GM12878 (cell line): ENCODE measurements at regions of chr5 and their contacts with region 1.

Region 1: DNA sequence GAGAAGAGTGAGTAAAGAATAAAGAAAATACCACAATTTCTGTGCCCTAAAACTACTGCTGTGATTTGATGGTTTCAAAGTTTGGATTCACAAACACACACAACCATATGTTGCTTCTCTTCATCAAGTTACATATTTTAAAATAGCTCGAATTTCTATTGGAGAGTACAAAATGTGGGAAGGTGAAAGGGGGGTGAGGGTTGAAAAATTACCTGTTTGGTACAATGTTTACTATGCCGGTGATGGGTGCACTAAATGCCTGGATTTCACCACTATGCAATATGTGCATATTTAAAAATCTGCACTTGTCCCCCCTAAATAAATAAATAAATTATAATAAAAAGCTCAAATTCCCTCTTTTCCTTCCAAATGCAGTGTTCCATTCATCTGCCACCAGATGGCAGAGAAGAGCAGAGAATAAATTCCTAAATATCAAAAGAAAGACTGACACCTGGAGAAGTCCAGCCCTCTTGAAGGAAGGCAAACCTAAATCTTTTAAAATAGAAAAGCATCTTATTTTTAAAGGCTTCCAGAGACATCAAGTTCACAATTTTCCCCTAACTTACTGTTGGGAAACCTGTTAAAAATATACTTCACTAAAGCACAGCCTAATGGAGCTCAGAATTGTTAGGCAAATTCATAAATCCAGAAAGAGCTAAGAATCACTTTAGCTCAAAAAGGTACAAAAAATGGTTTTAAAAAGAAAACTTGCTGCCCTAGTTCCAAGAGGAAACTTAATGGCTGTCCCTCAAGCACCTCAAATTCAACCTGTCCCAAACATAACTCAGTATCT is 24.8 kb upstream of the HNRNPA0 start:
- DNase-seq: no peak
- ATAC-seq: 0 out of 3 replicates have a peak, but pooled peaks have one; percentile 27
- H3K4me3 ChIP-seq: no peak overlapping the region
- H3K27ac ChIP-seq: no peak overlapping the region
- H3K4me1 ChIP-seq: peaks cover 3% of the 10 kb centered on the region; the same call in 1 of the 2 replicates
- H3K27me3 ChIP-seq: no peaks in the 10 kb centered on the region
- CTCF ChIP-seq: peak; percentile 63 to 65 (median 63)
- EP300 ChIP-seq: no peak
- POLR2A ChIP-seq: no peak
- RAD21 ChIP-seq: peak; percentile 94

Region 2: DNA sequence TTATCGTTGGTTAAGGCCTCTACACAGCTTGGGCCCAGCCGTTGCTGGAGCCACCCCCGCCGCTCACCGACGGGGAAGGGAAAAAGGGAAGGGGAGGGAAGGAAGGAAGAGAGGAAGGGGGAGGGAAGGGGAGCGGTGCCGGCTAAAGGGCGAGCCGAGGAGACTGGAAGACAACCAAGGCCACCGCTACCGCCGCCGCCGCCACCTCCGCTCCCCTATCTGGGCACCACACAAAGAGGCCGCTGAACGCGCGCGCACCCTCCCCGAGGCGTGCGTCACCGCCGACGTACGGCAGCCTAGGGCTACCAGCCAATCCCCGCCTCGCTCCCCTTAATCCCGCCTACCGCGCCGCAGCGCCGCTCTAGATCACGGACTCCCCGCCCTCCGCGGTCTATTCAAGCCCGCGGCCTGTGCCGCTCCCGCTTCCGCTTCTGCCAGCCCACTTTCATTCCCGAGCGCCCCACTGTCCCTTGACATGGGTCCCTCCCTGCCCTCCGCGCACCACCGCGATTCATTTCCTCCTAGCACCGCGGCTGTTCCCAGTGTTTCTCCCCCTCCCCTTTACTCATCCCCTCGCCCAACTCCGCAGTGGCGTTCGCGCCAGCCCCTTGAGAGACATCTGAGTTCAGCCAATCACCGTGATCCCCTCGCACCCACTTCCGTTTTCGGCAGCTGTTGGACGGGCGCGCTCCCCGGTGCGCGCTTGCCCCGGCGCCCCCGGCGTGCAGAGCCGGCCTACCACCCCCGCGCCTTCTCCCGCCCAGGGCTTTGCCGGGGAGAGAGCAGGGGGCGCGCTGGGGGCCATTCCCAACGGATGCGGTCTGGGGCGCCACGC is 24.6 kb before region 1 on chr5 and contains the start of gene HNRNPA0:
- CTCF ChIA-PET with region 1: interaction called, 19 read pairs
- POLR2A ChIA-PET with region 1: interaction called, 4 read pairs
- RAD21 ChIA-PET with region 1: interaction called, 16 read pairs
- SMC1A ChIA-PET with region 1: interaction called, 8 read pairs
- in situ Hi-C with region 1: no loop called
- intact Hi-C with region 1: no loop called
- DNase-seq: peak; percentile 88
- ATAC-seq: peak; percentile 88
- H3K4me3 ChIP-seq: peak within 1 kb of the TSS; percentile 91
- H3K27ac ChIP-seq: peak within 1 kb of the TSS; percentile 96
- H3K4me1 ChIP-seq: peaks cover 28% of the 10 kb centered on the region
- H3K27me3 ChIP-seq: no peaks in the 10 kb centered on the region
- CTCF ChIP-seq: no peak
- EP300 ChIP-seq: peak in 1 of 2 experiments; percentile 100; a peak in 2 of 4 replicates
- POLR2A ChIP-seq: peak; percentile 86
- RAD21 ChIP-seq: no peak
- polyA plus RNA-seq, gene HNRNPA0: 7.3 to 8.2 TPM

Region 3: DNA sequence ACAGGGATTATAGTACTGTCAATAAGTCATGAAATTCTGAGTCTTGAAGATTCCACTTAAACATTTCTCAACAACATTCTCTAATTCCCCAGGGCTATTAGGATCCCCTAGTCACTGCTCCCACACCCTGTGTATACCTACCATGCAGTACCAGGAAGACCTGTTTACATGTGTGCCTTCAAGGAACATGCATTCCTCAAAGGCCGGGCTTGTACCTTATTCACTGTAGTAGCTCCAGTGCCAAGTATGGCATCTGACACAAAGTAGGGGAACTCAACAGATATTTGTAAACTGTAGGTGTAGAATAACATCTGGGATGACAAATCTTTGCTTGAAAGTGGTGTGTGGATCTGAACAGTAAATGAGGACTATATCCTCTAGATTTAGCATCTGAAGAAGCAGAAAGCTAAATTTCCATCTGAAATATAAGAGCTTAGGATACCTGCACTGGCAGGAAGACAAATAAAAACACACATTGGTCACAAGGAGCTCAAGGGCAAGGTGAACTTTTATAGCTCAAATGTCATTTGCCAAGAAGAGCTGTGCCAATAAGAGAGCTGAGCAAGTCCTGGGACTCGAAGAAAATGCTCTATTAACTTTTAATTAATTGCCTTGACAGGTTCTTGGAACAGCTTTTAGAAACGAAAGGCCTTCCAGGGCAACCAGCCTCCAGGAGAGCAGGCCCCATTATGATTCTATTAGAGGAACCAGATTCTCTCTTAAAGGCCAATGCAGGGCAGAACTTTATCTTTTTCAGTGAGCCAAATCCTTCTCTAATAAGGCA is 36.4 kb after region 1 on chr5:
- CTCF ChIA-PET with region 1: interaction called, 16 read pairs
- POLR2A ChIA-PET with region 1: interaction called, 3 read pairs
- RAD21 ChIA-PET with region 1: interaction called, 10 read pairs
- SMC1A ChIA-PET with region 1: interaction called, 10 read pairs
- in situ Hi-C with region 1: no loop called
- intact Hi-C with region 1: no loop called
- DNase-seq: no peak
- ATAC-seq: no peak
- H3K4me3 ChIP-seq: no peak overlapping the region
- H3K27ac ChIP-seq: no peak overlapping the region
- H3K4me1 ChIP-seq: no peaks in the 10 kb centered on the region
- H3K27me3 ChIP-seq: no peaks in the 10 kb centered on the region
- CTCF ChIP-seq: no peak
- EP300 ChIP-seq: no peak
- POLR2A ChIP-seq: no peak
- RAD21 ChIP-seq: no peak

Region 4: GRCh38 chr5:137914758-137915157 is 135.8 kb after region 1 on chr5:
- CTCF ChIA-PET with region 1: interaction called, 11 read pairs
- POLR2A ChIA-PET with region 1: no interaction called
- RAD21 ChIA-PET with region 1: interaction called, 5 read pairs
- SMC1A ChIA-PET with region 1: interaction called, 8 read pairs
- in situ Hi-C with region 1: no loop called
- intact Hi-C with region 1: no loop called
- DNase-seq: no peak
- ATAC-seq: no peak
- H3K4me3 ChIP-seq: no peak overlapping the region
- H3K27ac ChIP-seq: no peak overlapping the region
- H3K4me1 ChIP-seq: no peaks in the 10 kb centered on the region
- H3K27me3 ChIP-seq: no peaks in the 10 kb centered on the region
- CTCF ChIP-seq: no peak
- EP300 ChIP-seq: no peak
- POLR2A ChIP-seq: no peak
- RAD21 ChIP-seq: no peak

Region 5: GRCh38 chr5:137954131-137954879 is 175.3 kb after region 1 on chr5:
- CTCF ChIA-PET with region 1: interaction called, 16 read pairs
- POLR2A ChIA-PET with region 1: no interaction called
- RAD21 ChIA-PET with region 1: interaction called, 7 read pairs
- SMC1A ChIA-PET with region 1: interaction called, 5 read pairs
- in situ Hi-C with region 1: no loop called
- intact Hi-C with region 1: no loop called
- DNase-seq: no peak
- ATAC-seq: no peak
- H3K4me3 ChIP-seq: no peak overlapping the region
- H3K27ac ChIP-seq: no peak overlapping the region
- H3K4me1 ChIP-seq: no peaks in the 10 kb centered on the region
- H3K27me3 ChIP-seq: no peaks in the 10 kb centered on the region
- CTCF ChIP-seq: no peak
- EP300 ChIP-seq: no peak
- POLR2A ChIP-seq: no peak
- RAD21 ChIP-seq: no peak

Region 6: GRCh38 chr5:138035605-138036537 is 256.9 kb after region 1 on chr5:
- CTCF ChIA-PET with region 1: interaction called, 80 read pairs
- POLR2A ChIA-PET with region 1: interaction called, 3 read pairs
- RAD21 ChIA-PET with region 1: interaction called, 13 read pairs
- SMC1A ChIA-PET with region 1: interaction called, 37 read pairs
- in situ Hi-C with region 1: no loop called
- intact Hi-C with region 1: no loop called
- DNase-seq: peak; percentile 63
- ATAC-seq: peak; percentile 56
- H3K4me3 ChIP-seq: no peak overlapping the region
- H3K27ac ChIP-seq: no peak overlapping the region
- H3K4me1 ChIP-seq: peaks cover 22% of the 10 kb centered on the region
- H3K27me3 ChIP-seq: no peaks in the 10 kb centered on the region
- CTCF ChIP-seq: peak; percentile 74 to 99 (median 96)
- EP300 ChIP-seq: no peak
- POLR2A ChIP-seq: no peak
- RAD21 ChIP-seq: peak; percentile 69

Region 7: GRCh38 chr5:138138949-138139780 is 360.2 kb after region 1 on chr5 and contains the start of gene NME5:
- CTCF ChIA-PET with region 1: interaction called, 16 read pairs
- POLR2A ChIA-PET with region 1: no interaction called
- RAD21 ChIA-PET with region 1: interaction called, 4 read pairs
- SMC1A ChIA-PET with region 1: interaction called, 26 read pairs
- in situ Hi-C with region 1: loop called (anchors 10 kb)
- intact Hi-C with region 1: no loop called
- DNase-seq: peak; percentile 5
- ATAC-seq: peak; percentile 96
- H3K4me3 ChIP-seq: peak within 1 kb of the TSS; percentile 71
- H3K27ac ChIP-seq: no peak within 1 kb of the TSS
- H3K4me1 ChIP-seq: no peaks in the 10 kb centered on the region
- H3K27me3 ChIP-seq: no peaks in the 10 kb centered on the region
- CTCF ChIP-seq: no peak
- EP300 ChIP-seq: no peak
- POLR2A ChIP-seq: no peak
- RAD21 ChIP-seq: no peak
- polyA plus RNA-seq, gene NME5: 0.22 TPM in 1 of 2 experiments, not detected in the other